Cardiac septum (tissue), 1 donor: ENCODE measurements at regions of chr13 and their contacts with region 1.

Region 1: DNA sequence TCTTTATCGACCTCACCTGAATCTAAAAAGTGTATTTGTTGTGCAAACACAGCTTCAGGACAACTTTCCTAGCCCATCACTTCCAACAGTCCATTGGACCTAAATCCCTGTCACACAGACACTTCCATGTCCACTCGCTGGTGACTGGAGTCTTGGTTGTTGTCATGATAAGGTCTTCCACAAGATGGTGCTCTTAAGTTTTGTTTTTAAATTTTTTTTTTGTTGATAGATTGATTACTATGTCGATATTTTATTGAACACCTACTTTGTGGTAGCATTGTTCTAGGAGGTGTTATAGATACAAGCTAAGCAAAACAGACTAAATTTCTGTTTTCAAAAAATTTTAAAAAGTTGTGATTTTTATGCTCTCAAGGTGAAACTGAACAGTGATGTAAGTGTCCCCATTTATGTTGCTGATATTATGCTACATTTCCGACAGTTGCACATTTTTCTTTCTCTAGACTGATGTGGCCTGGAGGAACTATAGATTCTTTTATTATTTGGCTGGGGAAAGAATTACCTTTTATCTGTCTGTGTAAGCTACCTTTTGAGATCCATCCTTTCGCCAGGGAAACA is 8.1 kb upstream of the ERICH6B start:
- DNase-seq: no peak

Region 2: GRCh38 chr13:45879670-45880069 is 256.1 kb after region 1 on chr13:
- intact Hi-C with region 1: loop called (anchors 10 kb)
- DNase-seq: peak; percentile 78

Region 3: DNA sequence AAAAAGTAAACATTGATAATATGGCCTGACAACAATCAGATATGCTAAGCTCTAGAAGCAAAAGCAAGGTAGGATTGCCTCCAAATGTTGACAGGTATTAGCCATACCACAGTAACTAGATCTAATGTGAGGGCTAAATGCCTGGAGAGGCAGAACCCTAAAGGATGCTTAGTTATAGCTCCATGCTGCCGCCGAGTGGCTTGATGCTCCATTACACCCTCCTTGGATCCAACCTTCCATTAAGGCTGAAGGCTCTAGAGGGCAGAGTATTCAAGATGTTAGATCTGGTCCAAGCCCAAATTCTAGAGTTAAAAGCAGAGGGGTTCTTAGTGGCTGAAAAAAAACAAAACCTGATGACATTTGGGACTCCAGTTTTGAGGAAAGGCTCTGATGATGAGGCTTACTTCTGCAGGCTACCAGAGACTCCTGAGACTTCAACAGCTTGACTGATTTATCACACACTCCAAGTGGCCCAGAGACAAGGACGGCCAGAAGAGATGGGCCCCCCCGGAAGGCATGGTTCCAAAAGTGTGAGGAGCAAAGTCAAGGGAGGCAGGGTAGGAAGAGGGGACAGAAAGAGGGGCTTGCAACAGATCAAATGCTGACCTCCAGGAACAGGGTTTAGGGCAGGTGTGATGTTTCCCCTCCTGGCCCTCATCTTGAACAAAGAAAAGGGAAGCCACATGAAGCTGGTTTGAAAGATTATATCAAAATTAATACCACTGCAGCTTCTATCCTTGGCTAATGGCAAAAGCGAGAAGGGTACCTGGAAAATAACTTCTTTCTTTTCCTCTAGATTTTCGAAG is 503.2 kb after region 1 on chr13:
- intact Hi-C with region 1: loop called (anchors 5 kb)
- DNase-seq: no peak